Activated CD4-positive, alpha-beta memory T cell treated with anti-CD3 and anti-CD28 coated beads for 36 hours (primary cell): ENCODE measurements at regions of chr1 and their contacts with region 1.

Region 1: GRCh38 chr1:40951943-40952743 is 27.4 kb upstream of the CTPS1 start:
- DNase-seq: peak; percentile 73
- H3K4me3 Mint-ChIP-seq: no peak overlapping the region
- H3K27ac Mint-ChIP-seq: no peak overlapping the region
- H3K4me1 Mint-ChIP-seq: peaks cover 8% of the 10 kb centered on the region
- H3K27me3 Mint-ChIP-seq: peaks cover 13% of the 10 kb centered on the region

Region 2: GRCh38 chr1:40763742-40764532 is 188.2 kb before region 1 on chr1:
- CTCF ChIA-PET with region 1: interaction called, 123 read pairs
- POLR2A ChIA-PET with region 1: no interaction called
- intact Hi-C with region 1: no loop called
- DNase-seq: peak; percentile 18
- H3K4me3 Mint-ChIP-seq: no peak overlapping the region
- H3K27ac Mint-ChIP-seq: peak overlapping the region; percentile 78
- H3K4me1 Mint-ChIP-seq: peaks cover 32% of the 10 kb centered on the region
- H3K27me3 Mint-ChIP-seq: no peaks in the 10 kb centered on the region

Region 3: DNA sequence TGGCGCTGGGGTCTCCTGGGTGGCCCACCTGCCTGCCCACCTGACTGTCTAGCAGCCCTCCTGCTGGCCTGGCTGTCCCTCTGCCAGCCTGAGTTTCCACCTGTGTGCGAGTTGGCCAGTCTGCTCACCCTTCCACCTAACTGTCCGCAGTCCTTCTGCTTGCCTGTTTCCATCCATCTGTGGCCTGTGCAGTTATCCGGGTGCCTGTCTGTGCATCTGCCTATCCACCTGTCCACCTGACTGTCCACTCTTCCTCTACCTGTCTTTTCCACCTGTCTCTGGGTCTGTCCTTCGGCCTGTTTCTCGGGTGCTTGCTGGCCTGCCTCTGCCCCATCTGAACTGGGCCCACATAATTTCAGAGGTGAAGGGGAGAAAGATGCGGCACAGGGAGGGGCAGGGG is 166.7 kb before region 1 on chr1:
- CTCF ChIA-PET with region 1: no interaction called
- POLR2A ChIA-PET with region 1: no interaction called
- intact Hi-C with region 1: no loop called
- DNase-seq: no peak
- H3K4me3 Mint-ChIP-seq: no peak overlapping the region
- H3K27ac Mint-ChIP-seq: no peak overlapping the region
- H3K4me1 Mint-ChIP-seq: peaks cover 7% of the 10 kb centered on the region
- H3K27me3 Mint-ChIP-seq: peaks cover 30% of the 10 kb centered on the region

Region 4: DNA sequence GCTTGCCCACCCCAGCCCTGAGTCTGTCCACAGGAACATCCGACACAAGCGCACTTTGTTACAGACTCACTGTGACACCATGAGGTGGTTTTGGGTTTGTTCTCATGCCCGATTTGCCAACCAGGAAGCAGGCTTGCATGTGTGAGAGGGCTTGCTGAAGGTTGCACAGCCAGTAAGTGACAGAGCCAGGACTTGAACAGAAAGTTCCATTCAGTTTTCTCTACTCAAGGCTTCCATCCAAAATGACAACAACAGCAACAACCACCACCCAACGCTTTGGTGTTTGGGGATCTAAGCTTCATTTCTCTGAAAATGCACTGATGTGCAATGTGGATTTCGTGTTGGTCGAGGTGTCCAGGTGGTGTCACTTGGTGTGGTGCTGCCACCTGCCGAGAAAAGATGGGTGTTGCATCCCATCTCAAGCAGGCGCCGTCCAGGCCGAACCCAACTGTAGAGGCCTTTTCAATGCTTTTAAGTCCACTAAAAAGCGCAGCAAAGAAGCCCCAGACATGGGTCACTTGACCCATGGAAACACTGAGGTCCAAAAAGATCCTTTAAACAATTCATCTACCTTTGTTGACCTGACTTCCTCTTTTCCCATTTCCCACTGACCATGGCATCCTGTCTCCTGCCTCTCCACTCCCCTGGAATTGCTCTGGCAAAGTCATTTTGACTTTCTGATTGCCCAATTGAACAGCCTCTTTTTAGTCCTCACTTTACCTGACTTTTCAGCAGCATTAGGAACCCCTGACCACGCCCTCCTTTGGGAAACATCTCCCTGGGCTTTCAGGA is 102.1 kb before region 1 on chr1:
- CTCF ChIA-PET with region 1: interaction called, 152 read pairs
- POLR2A ChIA-PET with region 1: no interaction called
- intact Hi-C with region 1: loop called (anchors 1 kb)
- DNase-seq: peak; percentile 86
- H3K4me3 Mint-ChIP-seq: no peak overlapping the region
- H3K27ac Mint-ChIP-seq: no peak overlapping the region
- H3K4me1 Mint-ChIP-seq: peaks cover 8% of the 10 kb centered on the region
- H3K27me3 Mint-ChIP-seq: no peaks in the 10 kb centered on the region

Region 5: GRCh38 chr1:40877698-40878097 is 74.4 kb before region 1 on chr1:
- CTCF ChIA-PET with region 1: interaction called, 28 read pairs
- POLR2A ChIA-PET with region 1: no interaction called
- intact Hi-C with region 1: no loop called
- DNase-seq: peak; percentile 49
- H3K4me3 Mint-ChIP-seq: no peak overlapping the region
- H3K27ac Mint-ChIP-seq: no peak overlapping the region
- H3K4me1 Mint-ChIP-seq: peaks cover 30% of the 10 kb centered on the region
- H3K27me3 Mint-ChIP-seq: peaks cover 2% of the 10 kb centered on the region

Region 6: GRCh38 chr1:40939320-40940059 is 12.7 kb before region 1 on chr1:
- CTCF ChIA-PET with region 1: interaction called, 117 read pairs
- POLR2A ChIA-PET with region 1: no interaction called
- intact Hi-C with region 1: no loop called
- DNase-seq: no peak
- H3K4me3 Mint-ChIP-seq: no peak overlapping the region
- H3K27ac Mint-ChIP-seq: no peak overlapping the region
- H3K4me1 Mint-ChIP-seq: no peaks in the 10 kb centered on the region
- H3K27me3 Mint-ChIP-seq: no peaks in the 10 kb centered on the region

Region 7: DNA sequence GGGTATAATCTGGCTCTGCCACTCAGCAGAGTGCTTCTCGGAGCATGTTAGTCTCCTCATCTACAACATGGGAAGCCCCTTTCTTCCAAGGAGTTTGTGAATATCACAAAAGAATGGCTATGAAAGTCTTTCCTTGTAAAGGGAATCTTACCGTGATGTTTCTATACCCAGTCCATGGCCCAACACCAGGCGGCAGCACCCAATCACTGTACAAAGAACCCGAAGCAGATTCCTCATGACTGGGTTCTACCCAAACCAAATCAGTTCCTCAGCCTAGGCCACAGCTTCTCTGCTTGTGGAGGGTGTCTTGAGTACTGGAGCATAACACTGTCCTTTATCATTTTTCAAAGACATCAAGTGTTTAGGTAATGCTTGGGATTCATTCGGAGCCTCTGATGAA is 86.0 kb after region 1 on chr1:
- CTCF ChIA-PET with region 1: no interaction called
- POLR2A ChIA-PET with region 1: no interaction called
- intact Hi-C with region 1: no loop called
- DNase-seq: no peak
- H3K4me3 Mint-ChIP-seq: no peak overlapping the region
- H3K27ac Mint-ChIP-seq: no peak overlapping the region
- H3K4me1 Mint-ChIP-seq: no peaks in the 10 kb centered on the region
- H3K27me3 Mint-ChIP-seq: no peaks in the 10 kb centered on the region

Region 8: DNA sequence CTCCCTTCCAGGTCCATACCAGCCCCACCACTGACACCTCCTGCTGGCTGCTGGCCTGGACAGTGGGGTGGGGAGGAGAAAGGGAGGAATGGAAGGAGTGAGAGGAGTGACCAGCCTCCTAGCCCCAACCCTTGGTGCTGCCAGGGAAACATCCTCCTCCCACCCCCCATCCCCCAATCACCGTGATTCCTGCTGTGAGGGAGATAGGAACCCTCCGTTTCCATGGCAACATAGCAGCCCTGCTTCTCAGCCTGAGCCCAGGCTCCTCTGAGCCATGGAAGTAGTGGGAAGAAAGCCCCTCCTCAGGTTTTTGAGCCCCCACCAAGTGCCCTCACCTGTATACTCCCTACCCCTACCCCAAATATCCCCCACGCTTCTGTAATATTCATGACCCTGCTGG is 334.3 kb after region 1 on chr1:
- CTCF ChIA-PET with region 1: no interaction called
- POLR2A ChIA-PET with region 1: no interaction called
- intact Hi-C with region 1: no loop called
- DNase-seq: no peak
- H3K4me3 Mint-ChIP-seq: no peak overlapping the region
- H3K27ac Mint-ChIP-seq: no peak overlapping the region
- H3K4me1 Mint-ChIP-seq: no peaks in the 10 kb centered on the region
- H3K27me3 Mint-ChIP-seq: peaks cover 37% of the 10 kb centered on the region